GM12878 (cell line): ENCODE measurements at regions of chr17 and their contacts with region 1.

Region 1: DNA sequence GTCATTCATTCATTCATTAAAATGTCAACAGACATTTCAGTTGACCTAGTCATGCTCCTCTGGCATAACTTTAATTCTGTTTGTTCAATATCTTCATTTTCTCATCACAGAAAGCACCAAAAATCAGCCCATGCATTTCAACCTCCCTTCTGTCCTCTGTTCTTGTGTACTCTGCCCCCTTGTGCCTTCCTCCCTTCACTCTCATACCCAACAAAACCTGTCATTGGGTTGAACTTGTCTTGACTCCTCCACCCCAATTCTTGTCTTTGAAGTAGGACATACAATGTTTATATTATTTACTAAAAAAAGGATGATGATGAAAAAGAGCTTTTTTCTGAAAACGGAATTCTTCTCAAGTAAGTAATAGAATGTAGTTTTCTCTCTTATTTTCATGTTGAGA is 43.8 kb downstream of the COX10 start:
- DNase-seq: no peak
- ATAC-seq: no peak
- H3K4me3 ChIP-seq: no peak overlapping the region
- H3K27ac ChIP-seq: no peak overlapping the region
- H3K4me1 ChIP-seq: no peaks in the 10 kb centered on the region
- H3K27me3 ChIP-seq: no peaks in the 10 kb centered on the region
- CTCF ChIP-seq: no peak
- EP300 ChIP-seq: no peak
- POLR2A ChIP-seq: no peak
- RAD21 ChIP-seq: no peak

Region 2: GRCh38 chr17:14048169-14048568 is 65.0 kb before region 1 on chr17:
- CTCF ChIA-PET with region 1: no interaction called
- POLR2A ChIA-PET with region 1: no interaction called
- RAD21 ChIA-PET with region 1: no interaction called
- SMC1A ChIA-PET with region 1: no interaction called
- in situ Hi-C with region 1: no loop called
- intact Hi-C with region 1: no loop called
- DNase-seq: no peak
- ATAC-seq: peak; percentile 60
- H3K4me3 ChIP-seq: no peak overlapping the region
- H3K27ac ChIP-seq: no peak overlapping the region
- H3K4me1 ChIP-seq: peaks cover 6% of the 10 kb centered on the region; the same call in 1 of the 2 replicates
- H3K27me3 ChIP-seq: no peaks in the 10 kb centered on the region
- CTCF ChIP-seq: peak; percentile 22 to 52 (median 43); a peak in 5 of 6 replicates
- EP300 ChIP-seq: no peak
- POLR2A ChIP-seq: no peak
- RAD21 ChIP-seq: no peak

Region 3: DNA sequence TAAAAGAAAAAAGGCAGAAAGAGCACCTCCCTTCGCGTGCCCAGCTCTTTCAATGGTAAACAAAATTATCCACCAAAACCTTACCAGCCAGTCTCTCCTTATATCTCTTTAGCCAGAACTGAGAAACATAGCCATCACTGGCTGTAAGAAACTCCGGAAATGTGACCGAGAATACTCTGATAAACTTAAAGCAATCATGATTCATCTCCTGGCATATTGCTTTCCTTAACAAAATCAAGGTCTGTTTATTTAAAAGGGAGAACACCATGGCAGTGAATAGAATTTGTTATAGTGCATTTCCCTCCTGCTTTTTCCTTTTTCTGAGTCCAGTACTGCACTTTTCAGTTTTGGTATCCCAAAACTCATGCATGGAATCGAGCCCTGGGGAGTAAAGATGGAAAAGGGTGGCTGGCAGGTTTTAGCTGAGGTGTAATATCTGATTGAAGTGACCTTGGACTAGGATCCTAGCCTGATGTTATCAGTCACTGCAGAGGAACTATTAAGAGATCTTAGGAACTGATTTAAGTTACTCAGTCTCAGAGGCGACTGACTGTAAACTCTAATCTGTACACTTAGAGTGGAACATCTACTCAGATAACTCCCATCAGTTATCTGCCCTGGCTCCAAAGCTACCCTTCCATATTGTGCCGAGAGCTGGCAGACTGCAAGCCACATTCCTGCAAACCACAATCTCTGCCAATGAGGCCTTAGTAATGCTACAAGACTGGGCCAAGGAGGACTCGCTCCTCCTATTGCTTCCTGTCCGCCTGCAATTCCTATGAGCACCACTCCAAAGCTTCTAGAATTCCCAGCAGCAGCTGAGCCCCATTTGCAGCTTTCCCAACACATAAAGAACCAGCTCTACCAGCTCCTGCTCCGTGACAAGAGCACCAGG is 51.2 kb before region 1 on chr17:
- CTCF ChIA-PET with region 1: no interaction called
- POLR2A ChIA-PET with region 1: no interaction called
- RAD21 ChIA-PET with region 1: no interaction called
- SMC1A ChIA-PET with region 1: no interaction called
- in situ Hi-C with region 1: loop called (anchors 5 kb)
- intact Hi-C with region 1: no loop called
- DNase-seq: no peak
- ATAC-seq: no peak
- H3K4me3 ChIP-seq: no peak overlapping the region
- H3K27ac ChIP-seq: no peak overlapping the region
- H3K4me1 ChIP-seq: no peaks in the 10 kb centered on the region
- H3K27me3 ChIP-seq: no peaks in the 10 kb centered on the region
- CTCF ChIP-seq: no peak
- EP300 ChIP-seq: no peak
- POLR2A ChIP-seq: no peak
- RAD21 ChIP-seq: no peak